PC-9 (cell line): ENCODE measurements at regions of chr3 and their contacts with region 1.

Region 1: GRCh38 chr3:152258448-152259393 is 10.0 kb upstream of the MBNL1 start:
- DNase-seq: peak; percentile 82 to 99
- H3K4me3 ChIP-seq: peak overlapping the region; percentile 22; the same call in 1 of the 2 replicates
- H3K27ac ChIP-seq: peak overlapping the region; percentile 54
- H3K4me1 ChIP-seq: peaks cover 26% of the 10 kb centered on the region
- H3K27me3 ChIP-seq: no peaks in the 10 kb centered on the region
- CTCF ChIP-seq: no peak

Region 2: DNA sequence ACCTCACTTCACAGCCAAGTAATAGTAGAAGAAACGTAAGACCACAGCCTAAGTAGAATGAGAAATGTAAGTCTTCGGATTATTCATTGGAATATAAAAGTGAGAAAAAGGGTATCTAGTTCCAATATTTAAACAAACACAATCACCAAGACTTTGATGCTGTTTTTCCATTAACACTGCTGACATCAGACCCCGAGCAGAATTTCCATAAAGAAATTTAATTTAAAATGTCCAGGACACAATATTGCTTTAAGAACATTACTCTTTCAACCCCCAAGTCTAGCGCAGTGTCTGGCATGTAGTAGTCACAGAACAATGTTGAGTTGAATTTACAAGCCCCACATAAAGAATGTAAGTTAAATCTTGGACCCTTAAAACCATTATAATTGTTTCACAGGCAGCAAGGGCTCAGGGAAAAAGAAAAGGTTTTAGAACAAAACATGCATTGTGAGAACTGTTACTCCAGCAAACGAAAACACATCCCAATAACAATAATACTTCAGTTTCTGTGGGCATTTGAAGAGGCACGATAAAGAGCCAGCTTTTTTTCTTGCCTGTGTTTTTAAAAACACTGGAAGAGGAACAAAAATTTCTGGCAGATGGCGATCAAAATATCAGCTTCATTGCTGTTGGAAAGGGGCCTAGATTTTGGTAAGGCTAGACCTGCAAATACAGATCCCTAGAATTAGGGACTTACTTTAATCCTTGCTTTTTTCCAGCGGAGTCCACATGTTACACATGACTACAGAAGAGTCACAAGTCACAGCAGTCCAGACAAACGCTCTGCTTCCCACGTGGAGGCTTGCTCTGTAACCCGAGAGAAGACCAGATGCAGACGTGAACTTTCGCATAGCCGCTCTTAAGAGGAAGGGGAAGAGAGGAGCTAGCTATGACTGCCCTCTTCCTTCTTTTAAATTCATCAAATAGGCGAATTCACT is 720.0 kb before region 1 on chr3:
- CTCF ChIA-PET with region 1: no interaction called
- POLR2A ChIA-PET with region 1: no interaction called
- intact Hi-C with region 1: no loop called
- DNase-seq: no peak
- H3K4me3 ChIP-seq: no peak overlapping the region
- H3K27ac ChIP-seq: no peak overlapping the region
- H3K4me1 ChIP-seq: peaks cover 6% of the 10 kb centered on the region
- H3K27me3 ChIP-seq: no peaks in the 10 kb centered on the region
- CTCF ChIP-seq: no peak

Region 3: GRCh38 chr3:151611419-151611818 is 647.3 kb before region 1 on chr3:
- CTCF ChIA-PET with region 1: no interaction called
- POLR2A ChIA-PET with region 1: no interaction called
- intact Hi-C with region 1: no loop called
- DNase-seq: no peak
- H3K4me3 ChIP-seq: no peak overlapping the region
- H3K27ac ChIP-seq: no peak overlapping the region
- H3K4me1 ChIP-seq: no peaks in the 10 kb centered on the region
- H3K27me3 ChIP-seq: no peaks in the 10 kb centered on the region
- CTCF ChIP-seq: no peak

Region 4: GRCh38 chr3:151770956-151771355 is 487.8 kb before region 1 on chr3:
- CTCF ChIA-PET with region 1: no interaction called
- POLR2A ChIA-PET with region 1: interaction called, 11 read pairs
- intact Hi-C with region 1: no loop called
- DNase-seq: peak in 1 of 2 experiments; percentile 45
- H3K4me3 ChIP-seq: no peak overlapping the region
- H3K27ac ChIP-seq: no peak overlapping the region
- H3K4me1 ChIP-seq: peaks cover 13% of the 10 kb centered on the region
- H3K27me3 ChIP-seq: no peaks in the 10 kb centered on the region
- CTCF ChIP-seq: no peak